ENCODE measurements at regions of chr22 and their contacts with region 1.

Region 1: GRCh38 chr22:36467946-36468345 is 13.5 kb downstream of the TXN2 start:
- DNase-seq: no peak
- H3K4me3 ChIP-seq: no peak overlapping the region
- H3K27ac ChIP-seq: peak overlapping the region; percentile 49
- H3K4me1 ChIP-seq: peaks cover 16% of the 10 kb centered on the region
- H3K27me3 ChIP-seq: no peaks in the 10 kb centered on the region
- CTCF ChIP-seq: no peak

Region 2: GRCh38 chr22:36303874-36304273 is 164.1 kb before region 1 on chr22:
- intact Hi-C with region 1: loop called (anchors 2 kb)
- DNase-seq: peak; percentile 64
- H3K4me3 ChIP-seq: no peak overlapping the region
- H3K27ac ChIP-seq: peak overlapping the region; percentile 4
- H3K4me1 ChIP-seq: no peaks in the 10 kb centered on the region
- H3K27me3 ChIP-seq: no peaks in the 10 kb centered on the region
- CTCF ChIP-seq: no peak

Region 3: DNA sequence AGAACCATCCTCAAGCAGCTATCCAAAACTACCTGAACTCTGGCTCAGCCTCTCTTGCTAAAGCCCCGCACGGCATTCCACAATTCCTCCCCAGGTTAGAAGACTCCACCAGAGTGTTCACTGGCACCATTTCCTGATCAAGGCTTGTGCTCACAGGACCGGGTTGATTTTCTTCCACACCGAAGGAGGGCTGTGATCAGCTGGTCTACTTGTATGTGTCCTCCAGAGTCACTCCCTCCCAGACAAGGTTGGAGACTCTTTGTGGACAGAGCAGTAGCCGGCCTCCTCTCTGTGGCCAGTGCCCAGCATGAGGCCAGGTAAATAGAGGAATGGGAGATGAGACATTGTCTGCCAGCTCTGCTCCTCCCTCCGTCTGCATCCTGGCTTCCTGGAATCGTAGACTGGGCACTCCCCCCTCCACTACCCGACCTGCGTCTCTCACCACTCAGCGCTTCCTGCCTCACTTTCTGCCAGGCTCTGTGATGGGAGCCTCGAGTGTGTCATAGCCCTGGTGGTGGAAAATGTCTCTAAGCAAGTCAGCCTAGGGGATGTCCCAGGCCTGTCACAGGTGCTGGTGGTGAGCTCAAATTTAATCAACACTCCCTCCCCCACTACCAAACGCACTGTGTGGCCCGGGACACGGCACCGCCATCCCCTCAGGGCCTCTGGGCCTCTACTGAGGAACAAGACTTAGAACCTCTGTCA is 654.1 kb after region 1 on chr22:
- intact Hi-C with region 1: no loop called
- DNase-seq: peak; percentile 41
- H3K4me3 ChIP-seq: no peak overlapping the region
- H3K27ac ChIP-seq: no peak overlapping the region
- H3K4me1 ChIP-seq: no peaks in the 10 kb centered on the region
- H3K27me3 ChIP-seq: no peaks in the 10 kb centered on the region
- CTCF ChIP-seq: no peak

Measured in colonic mucosa (tissue), 4 donors.